Left ventricle myocardium superior (tissue), 1 donor: ENCODE measurements at regions of chr2 and their contacts with region 1.

Region 1: DNA sequence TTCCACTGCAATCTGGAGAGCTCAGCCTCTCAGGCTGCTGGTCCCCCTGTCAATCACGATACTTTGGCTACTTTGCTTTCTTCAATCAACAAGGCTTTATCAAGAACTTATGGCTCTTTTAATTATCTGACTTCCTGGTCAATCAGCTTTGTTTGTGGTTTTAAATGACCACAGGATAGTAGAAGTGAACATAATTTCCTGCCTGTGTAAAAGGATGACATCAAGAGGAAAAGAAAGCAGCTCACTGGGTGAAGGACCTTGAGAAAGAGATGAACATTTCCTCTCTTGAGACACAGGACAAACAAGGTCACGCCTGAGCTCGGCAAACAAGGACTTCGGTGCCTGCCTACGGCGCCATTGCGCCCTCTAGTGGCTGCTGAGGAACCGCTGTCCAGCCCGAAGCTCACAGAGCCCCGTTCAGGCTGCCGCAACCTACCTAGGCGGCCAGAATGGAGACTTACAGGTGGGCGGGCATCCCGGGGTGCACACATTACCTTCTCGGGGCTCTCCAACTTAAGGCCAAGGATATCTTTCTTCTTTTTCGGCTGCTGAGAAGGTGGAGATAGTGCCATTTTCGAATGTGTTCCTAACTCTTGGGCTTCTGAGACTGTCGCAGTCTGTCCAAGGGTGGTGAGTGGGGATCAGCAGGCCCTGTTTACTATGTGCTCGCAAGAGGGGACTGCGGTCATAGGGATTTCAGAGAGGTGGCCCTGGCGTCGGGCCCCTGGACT is 54.0 kb downstream of the IL1RL2 start:
- DNase-seq: peak; percentile 94
- ATAC-seq: peak; percentile 92

Region 2: GRCh38 chr2:102020596-102021181 is 220.1 kb before region 1 on chr2:
- intact Hi-C with region 1: loop called (anchors 5 kb)
- DNase-seq: peak; percentile 92
- ATAC-seq: peak; percentile 95

Region 3: DNA sequence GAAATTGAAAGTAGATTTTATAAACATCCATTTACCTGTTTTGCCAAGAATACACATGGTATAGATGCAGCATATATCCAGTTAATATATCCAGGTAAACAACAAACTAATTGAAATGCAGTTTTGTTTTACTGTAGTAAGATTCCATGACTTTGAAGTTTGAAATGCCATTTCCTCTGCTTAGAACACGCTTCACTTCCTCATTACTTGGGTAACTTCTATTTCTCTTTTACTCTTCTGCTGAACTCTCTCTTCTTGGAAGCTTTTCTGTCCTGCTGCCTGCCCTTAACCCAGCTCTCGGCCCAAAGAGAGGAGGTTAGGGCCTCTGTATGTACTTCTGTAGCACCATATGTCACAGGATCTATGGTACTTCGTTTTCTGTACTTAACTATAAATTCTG is 68.1 kb before region 1 on chr2:
- intact Hi-C with region 1: loop called (anchors 10 kb)
- DNase-seq: no peak
- ATAC-seq: no peak

Region 4: DNA sequence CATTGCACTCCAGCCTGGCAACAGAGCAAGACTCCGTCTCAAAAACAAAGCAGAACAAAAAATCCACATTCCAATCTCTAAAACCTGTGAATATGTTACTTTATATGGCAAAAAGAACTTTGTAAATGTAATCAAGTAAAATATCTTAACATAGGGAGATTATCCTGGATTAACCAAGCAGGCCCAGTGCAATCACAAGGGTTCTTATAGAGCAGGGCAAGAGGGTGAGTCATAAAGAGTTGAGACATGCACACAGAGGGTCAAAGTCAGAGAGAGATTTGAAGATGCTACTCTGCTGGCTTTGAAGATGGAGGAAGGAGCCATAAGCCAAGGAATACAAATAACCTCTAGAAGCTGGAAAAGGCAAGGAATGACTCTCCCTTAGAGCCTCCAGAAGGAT is 317.7 kb after region 1 on chr2:
- intact Hi-C with region 1: no loop called
- DNase-seq: no peak
- ATAC-seq: no peak